ENCODE measurements at regions of chr3 and their contacts with region 1.

Region 1: GRCh38 chr3:41581700-41582099 is 380.2 kb downstream of the ULK4 start:
- DNase-seq: no peak
- ATAC-seq: no peak
- H3K4me3 ChIP-seq: no peak overlapping the region
- H3K4me3 Mint-ChIP-seq: no peak overlapping the region
- H3K27ac ChIP-seq: no peak overlapping the region
- H3K27ac Mint-ChIP-seq: peak overlapping the region in 1 of 9 donors; percentile 84
- H3K4me1 ChIP-seq: no peaks in the 10 kb centered on the region
- H3K4me1 Mint-ChIP-seq: peaks cover 0 to 3% (median 0%) of the 10 kb centered on the region in 7 donors
- H3K27me3 ChIP-seq: no peaks in the 10 kb centered on the region
- H3K27me3 Mint-ChIP-seq: no peaks in the 10 kb centered on the region

Region 2: DNA sequence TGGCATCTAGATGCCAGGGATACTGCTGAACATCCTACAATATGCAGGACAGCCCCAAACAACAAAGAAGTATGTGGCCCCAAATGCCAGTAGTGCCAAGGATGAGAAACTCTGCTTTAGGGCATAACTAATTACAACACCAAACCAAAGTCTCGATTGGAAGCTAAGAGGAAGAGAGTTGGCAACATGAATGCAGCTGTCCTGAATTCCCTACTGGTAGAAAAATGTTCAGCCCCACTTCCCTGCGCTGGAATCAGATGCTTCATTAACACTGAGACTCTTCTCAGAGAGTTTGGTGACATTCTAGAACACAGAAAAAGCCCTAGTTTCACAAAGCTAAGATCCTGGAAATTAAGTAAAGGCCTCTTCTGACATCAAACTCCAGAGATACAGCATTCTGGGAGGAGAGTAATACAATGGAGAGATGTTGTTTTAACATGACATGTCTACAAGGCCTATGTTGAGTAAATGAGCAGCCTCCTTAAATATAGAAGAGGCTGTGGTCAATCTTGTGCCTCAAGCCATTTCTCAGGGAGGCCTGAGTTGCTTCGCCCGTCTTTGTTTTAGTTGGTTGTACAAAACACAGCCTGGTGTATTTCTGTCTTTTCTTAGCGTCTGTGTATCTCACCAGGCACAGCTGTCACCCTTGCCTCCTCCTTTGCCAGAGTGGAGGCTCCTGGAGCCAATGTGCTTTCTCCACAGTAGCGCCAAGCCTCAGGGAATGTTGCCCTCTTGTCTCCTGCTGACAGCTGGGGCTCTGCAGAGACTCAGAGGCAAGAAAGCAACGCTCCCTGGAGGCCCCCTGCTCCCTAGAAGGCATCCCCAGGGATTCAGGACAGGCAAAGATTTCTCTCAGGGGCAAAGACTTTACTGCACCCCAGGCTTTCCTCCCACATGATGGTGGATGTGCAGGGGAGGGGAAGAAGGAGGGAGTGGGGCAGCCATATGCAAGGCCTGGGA is 407.5 kb before region 1 on chr3:
- CTCF ChIA-PET with region 1: no interaction called
- POLR2A ChIA-PET with region 1: no interaction called
- intact Hi-C with region 1: loop called in 1 of 2 experiments (anchors 5 kb)
- DNase-seq: no peak
- ATAC-seq: no peak
- H3K4me3 ChIP-seq: no peak overlapping the region
- H3K4me3 Mint-ChIP-seq: no peak overlapping the region
- H3K27ac ChIP-seq: no peak overlapping the region
- H3K27ac Mint-ChIP-seq: no peak overlapping the region
- H3K4me1 ChIP-seq: no peaks in the 10 kb centered on the region
- H3K4me1 Mint-ChIP-seq: peaks cover 0 to 2% (median 0%) of the 10 kb centered on the region in 7 donors
- H3K27me3 ChIP-seq: no peaks in the 10 kb centered on the region
- H3K27me3 Mint-ChIP-seq: peaks cover 8 to 27% (median 11%) of the 10 kb centered on the region in 5 donors

Region 3: GRCh38 chr3:41362638-41363559 is 218.8 kb before region 1 on chr3:
- CTCF ChIA-PET with region 1: no interaction called
- POLR2A ChIA-PET with region 1: no interaction called
- intact Hi-C with region 1: no loop called
- DNase-seq: no peak
- ATAC-seq: no peak
- H3K4me3 ChIP-seq: no peak overlapping the region
- H3K4me3 Mint-ChIP-seq: no peak overlapping the region
- H3K27ac ChIP-seq: no peak overlapping the region
- H3K27ac Mint-ChIP-seq: no peak overlapping the region
- H3K4me1 ChIP-seq: no peaks in the 10 kb centered on the region
- H3K4me1 Mint-ChIP-seq: peaks cover 0 to 4% (median 0%) of the 10 kb centered on the region in 7 donors
- H3K27me3 ChIP-seq: no peaks in the 10 kb centered on the region
- H3K27me3 Mint-ChIP-seq: no peaks in the 10 kb centered on the region